Activated B cell treated with CpG ODN at 0.5 μM for 24 hours (primary cell): ENCODE measurements at regions of chr16 and their contacts with region 1.

Region 1: GRCh38 chr16:30657866-30658730 is at the start of gene FBRS:
- DNase-seq: peak; percentile 99
- ATAC-seq: peak; percentile 73
- H3K4me3 Mint-ChIP-seq: peak within 1 kb of the TSS; percentile 98
- H3K27ac Mint-ChIP-seq: peak within 1 kb of the TSS; percentile 100
- H3K4me1 Mint-ChIP-seq: peaks cover 37% of the 10 kb centered on the region
- H3K27me3 Mint-ChIP-seq: no peaks in the 10 kb centered on the region
- CTCF ChIP-seq: no peak
- total RNA-seq, gene FBRS: 166 and 204 TPM in 2 replicates

Region 2: GRCh38 chr16:30091474-30092372 is 566.4 kb before region 1 on chr16 and contains the start of gene TBX6:
- CTCF ChIA-PET with region 1: interaction called, 3 read pairs
- POLR2A ChIA-PET with region 1: no interaction called
- intact Hi-C with region 1: loop called (anchors 1 kb)
- DNase-seq: peak; percentile 93
- ATAC-seq: peak; percentile 77
- H3K4me3 Mint-ChIP-seq: peak within 1 kb of the TSS; percentile 89
- H3K27ac Mint-ChIP-seq: peak within 1 kb of the TSS; percentile 94
- H3K4me1 Mint-ChIP-seq: peaks cover 50% of the 10 kb centered on the region
- H3K27me3 Mint-ChIP-seq: no peaks in the 10 kb centered on the region
- CTCF ChIP-seq: peak; percentile 67
- total RNA-seq, gene TBX6: 2.3 TPM in 2 replicates

Region 3: GRCh38 chr16:30472328-30472942 is 185.7 kb before region 1 on chr16 and contains the start of gene ITGAL:
- CTCF ChIA-PET with region 1: no interaction called
- POLR2A ChIA-PET with region 1: interaction called, 4 read pairs
- intact Hi-C with region 1: loop called (anchors 1 kb)
- DNase-seq: peak; percentile 59
- ATAC-seq: peak; percentile 65
- H3K4me3 Mint-ChIP-seq: peak within 1 kb of the TSS; percentile 89
- H3K27ac Mint-ChIP-seq: peak within 1 kb of the TSS; percentile 94
- H3K4me1 Mint-ChIP-seq: peaks cover 60% of the 10 kb centered on the region
- H3K27me3 Mint-ChIP-seq: no peaks in the 10 kb centered on the region
- CTCF ChIP-seq: no peak
- total RNA-seq, gene ITGAL: 216 and 240 TPM in 2 replicates

Region 4: GRCh38 chr16:30571695-30572600 is 86.2 kb before region 1 on chr16 and contains the start of gene ZNF688:
- CTCF ChIA-PET with region 1: no interaction called
- POLR2A ChIA-PET with region 1: interaction called, 17 read pairs
- intact Hi-C with region 1: loop called (anchors 1 kb)
- DNase-seq: peak; percentile 78
- ATAC-seq: peak; percentile 86
- H3K4me3 Mint-ChIP-seq: peak within 1 kb of the TSS; percentile 89
- H3K27ac Mint-ChIP-seq: peak within 1 kb of the TSS; percentile 96
- H3K4me1 Mint-ChIP-seq: peaks cover 41% of the 10 kb centered on the region
- H3K27me3 Mint-ChIP-seq: no peaks in the 10 kb centered on the region
- CTCF ChIP-seq: no peak
- total RNA-seq, gene ZNF688: 13.9 and 14.7 TPM in 2 replicates

Region 5: GRCh38 chr16:30692381-30693064 is 34.4 kb after region 1 on chr16:
- CTCF ChIA-PET with region 1: interaction called, 44 read pairs
- POLR2A ChIA-PET with region 1: interaction called, 107 read pairs
- intact Hi-C with region 1: loop called (anchors 1 kb)
- DNase-seq: no peak
- ATAC-seq: no peak
- H3K4me3 Mint-ChIP-seq: no peak overlapping the region
- H3K27ac Mint-ChIP-seq: no peak overlapping the region
- H3K4me1 Mint-ChIP-seq: peaks cover 11% of the 10 kb centered on the region
- H3K27me3 Mint-ChIP-seq: no peaks in the 10 kb centered on the region
- CTCF ChIP-seq: no peak

Region 6: GRCh38 chr16:30820952-30821760 is 163.1 kb after region 1 on chr16:
- CTCF ChIA-PET with region 1: no interaction called
- POLR2A ChIA-PET with region 1: no interaction called
- intact Hi-C with region 1: no loop called
- DNase-seq: no peak
- ATAC-seq: no peak
- H3K4me3 Mint-ChIP-seq: no peak overlapping the region
- H3K27ac Mint-ChIP-seq: no peak overlapping the region
- H3K4me1 Mint-ChIP-seq: no peaks in the 10 kb centered on the region
- H3K27me3 Mint-ChIP-seq: no peaks in the 10 kb centered on the region
- CTCF ChIP-seq: no peak

Region 7: GRCh38 chr16:30874821-30875717 is 217.0 kb after region 1 on chr16:
- CTCF ChIA-PET with region 1: no interaction called
- POLR2A ChIA-PET with region 1: interaction called, 6 read pairs
- intact Hi-C with region 1: loop called (anchors 1 kb)
- DNase-seq: peak; percentile 90
- ATAC-seq: peak; percentile 83
- H3K4me3 Mint-ChIP-seq: peak overlapping the region; percentile 94
- H3K27ac Mint-ChIP-seq: peak overlapping the region; percentile 95
- H3K4me1 Mint-ChIP-seq: peaks cover 37% of the 10 kb centered on the region
- H3K27me3 Mint-ChIP-seq: no peaks in the 10 kb centered on the region
- CTCF ChIP-seq: no peak